ENCODE measurements at regions of chr19 and their contacts with region 1.

Region 1: GRCh38 chr19:29529646-29530539 is 4.1 kb downstream of the VSTM2B start:
- DNase-seq: no peak
- ATAC-seq: no peak
- H3K4me3 Mint-ChIP-seq: peak overlapping the region; percentile 8
- H3K27ac Mint-ChIP-seq: no peak overlapping the region
- H3K4me1 Mint-ChIP-seq: peaks cover 26% of the 10 kb centered on the region
- H3K27me3 Mint-ChIP-seq: peaks cover 60% of the 10 kb centered on the region
- CTCF ChIP-seq: no peak

Region 2: GRCh38 chr19:29587518-29587986 is 57.7 kb after region 1 on chr19:
- CTCF ChIA-PET with region 1: no interaction called
- POLR2A ChIA-PET with region 1: no interaction called
- intact Hi-C with region 1: loop called (anchors 5 kb)
- DNase-seq: peak; percentile 85
- ATAC-seq: peak; percentile 99
- H3K4me3 Mint-ChIP-seq: no peak overlapping the region
- H3K27ac Mint-ChIP-seq: peak overlapping the region; percentile 55
- H3K4me1 Mint-ChIP-seq: peaks cover 29% of the 10 kb centered on the region
- H3K27me3 Mint-ChIP-seq: peaks cover 17% of the 10 kb centered on the region
- CTCF ChIP-seq: no peak